ENCODE measurements at regions of chr5 and their contacts with region 1.

Region 1: GRCh38 chr5:40873286-40873880 is 32.2 kb downstream of the CARD6 start:
- DNase-seq: no peak
- ATAC-seq: no peak
- H3K4me3 ChIP-seq: no peak overlapping the region
- H3K4me3 Mint-ChIP-seq: no peak overlapping the region
- H3K27ac ChIP-seq: no peak overlapping the region
- H3K27ac Mint-ChIP-seq: no peak overlapping the region
- H3K4me1 ChIP-seq: no peaks in the 10 kb centered on the region
- H3K4me1 Mint-ChIP-seq: no peaks in the 10 kb centered on the region
- H3K27me3 ChIP-seq: no peaks in the 10 kb centered on the region
- H3K27me3 Mint-ChIP-seq: peaks cover 0 to 4% of the 10 kb centered on the region in 2 donors

Region 2: GRCh38 chr5:40720069-40720468 is 153.3 kb before region 1 on chr5:
- CTCF ChIA-PET with region 1: no interaction called
- POLR2A ChIA-PET with region 1: interaction called in 1 of 2 experiments, 15 read pairs
- DNase-seq: no peak
- ATAC-seq: no peak
- H3K4me3 ChIP-seq: no peak overlapping the region
- H3K4me3 Mint-ChIP-seq: no peak overlapping the region
- H3K27ac ChIP-seq: no peak overlapping the region
- H3K27ac Mint-ChIP-seq: no peak overlapping the region
- H3K4me1 ChIP-seq: no peaks in the 10 kb centered on the region
- H3K4me1 Mint-ChIP-seq: peaks cover 5 to 12% (median 6%) of the 10 kb centered on the region in 3 donors
- H3K27me3 ChIP-seq: no peaks in the 10 kb centered on the region
- H3K27me3 Mint-ChIP-seq: no peaks in the 10 kb centered on the region

Region 3: GRCh38 chr5:40981420-40981819 is 108.0 kb after region 1 on chr5:
- CTCF ChIA-PET with region 1: no interaction called
- POLR2A ChIA-PET with region 1: no interaction called
- DNase-seq: no peak
- ATAC-seq: no peak
- H3K4me3 ChIP-seq: no peak overlapping the region
- H3K4me3 Mint-ChIP-seq: no peak overlapping the region
- H3K27ac ChIP-seq: no peak overlapping the region
- H3K27ac Mint-ChIP-seq: no peak overlapping the region
- H3K4me1 ChIP-seq: no peaks in the 10 kb centered on the region
- H3K4me1 Mint-ChIP-seq: no peaks in the 10 kb centered on the region
- H3K27me3 ChIP-seq: peaks cover 0 to 10% of the 10 kb centered on the region in 2 experiments
- H3K27me3 Mint-ChIP-seq: peaks cover 15 to 27% of the 10 kb centered on the region in 2 donors

Measured in T-cell (primary cell).